HEK293 (cell line): ENCODE measurements at regions of chr17 and their contacts with region 1.

Region 1: GRCh38 chr17:49369089-49369488 is 7.0 kb upstream of the ZNF652 start:
- H3K4me3 ChIP-seq: no peak overlapping the region
- H3K27ac ChIP-seq: no peak overlapping the region
- H3K4me1 ChIP-seq: peaks cover 3% of the 10 kb centered on the region; the same call in 1 of the 2 replicates
- CTCF ChIP-seq: no peak

Region 2: GRCh38 chr17:49390548-49391324 is 21.6 kb after region 1 on chr17:
- CTCF ChIA-PET with region 1: interaction called, 17 read pairs
- POLR2A ChIA-PET with region 1: interaction called, 7 read pairs
- H3K4me3 ChIP-seq: no peak overlapping the region
- H3K27ac ChIP-seq: peak overlapping the region; percentile 24
- H3K4me1 ChIP-seq: peaks cover 13% of the 10 kb centered on the region
- CTCF ChIP-seq: no peak